ENCODE measurements at regions of chr15 and their contacts with region 1.

Region 1: DNA sequence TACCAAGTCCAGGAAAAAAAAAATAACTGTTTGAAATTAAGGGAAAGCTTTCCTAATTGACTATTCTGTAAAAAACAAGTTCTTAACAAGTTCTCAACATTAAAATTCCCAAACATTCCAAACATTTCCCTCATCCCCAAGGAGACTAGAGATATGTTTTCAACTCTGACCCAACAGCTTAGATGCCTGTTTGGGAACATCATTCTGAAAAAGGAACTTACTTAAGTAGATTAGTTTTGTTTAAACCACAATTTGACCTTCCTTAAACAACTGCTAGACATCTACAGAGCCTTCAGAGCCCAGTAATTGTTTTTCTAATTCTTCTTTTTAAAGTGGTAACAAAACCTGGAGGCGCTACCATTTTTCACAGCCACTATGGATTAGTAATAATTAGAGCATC is 12.8 kb downstream of the UBR1 start:
- DNase-seq: peak; percentile 20
- CTCF ChIP-seq: no peak

Region 2: DNA sequence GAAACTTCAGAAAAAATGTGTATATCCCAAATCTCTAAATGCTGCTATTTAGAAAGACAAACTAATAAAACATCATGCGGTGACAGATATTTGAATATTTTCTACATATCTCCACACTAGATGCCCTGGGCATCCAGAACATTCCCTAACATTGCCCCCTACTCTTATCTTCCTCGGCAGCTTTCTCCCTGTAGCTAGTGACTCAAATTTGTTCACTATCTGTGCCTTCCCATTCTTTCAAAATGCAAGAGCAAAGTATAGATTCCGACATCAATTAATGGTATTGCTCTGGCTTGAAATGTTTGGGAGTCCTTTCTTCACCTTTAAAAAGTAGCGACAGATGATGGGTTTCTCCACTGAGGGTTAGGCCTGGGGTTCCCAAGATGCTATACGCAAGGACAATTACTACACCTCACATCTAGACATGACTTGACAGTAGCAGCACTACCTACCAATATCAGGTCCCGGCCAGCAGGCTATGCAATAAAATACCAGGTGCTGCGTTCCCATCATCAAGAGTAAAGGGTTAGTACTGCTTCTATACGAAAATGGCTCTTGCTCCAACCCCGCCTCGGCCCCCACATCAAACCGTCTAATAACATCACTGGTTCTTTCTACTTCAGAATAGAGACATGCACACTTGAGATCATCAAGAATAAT is 12.2 kb after region 1 on chr15:
- CTCF ChIA-PET with region 1: interaction called, 18 read pairs
- POLR2A ChIA-PET with region 1: interaction called, 3 read pairs
- DNase-seq: peak; percentile 19
- CTCF ChIP-seq: no peak

Measured in GM10248 (cell line).